ENCODE measurements at regions of chr11 and their contacts with region 1.

Region 1: GRCh38 chr11:118380571-118380970 is 20.8 kb upstream of the ATP5MG start:
- DNase-seq: no peak
- ATAC-seq: no peak
- H3K4me3 ChIP-seq: no peak overlapping the region
- H3K4me1 ChIP-seq: no peaks in the 10 kb centered on the region
- CTCF ChIP-seq: no peak

Region 2: DNA sequence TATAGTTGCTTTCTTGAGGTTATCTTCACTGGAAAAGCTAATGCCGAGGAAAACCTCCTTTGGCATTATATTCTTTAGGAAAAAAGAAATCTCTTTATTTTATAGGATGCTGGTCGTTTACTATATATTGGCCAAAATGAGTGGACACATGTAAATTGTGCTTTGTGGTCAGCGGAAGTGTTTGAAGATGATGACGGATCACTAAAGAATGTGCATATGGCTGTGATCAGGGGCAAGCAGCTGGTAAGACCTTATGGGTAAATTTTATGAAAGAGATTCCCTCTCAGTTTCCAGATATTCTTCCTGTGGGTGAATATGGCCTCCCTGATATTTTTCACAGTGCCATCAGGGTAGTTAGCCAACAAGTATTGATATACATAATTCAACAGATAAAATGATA is 117.3 kb after region 1 on chr11:
- intact Hi-C with region 1: loop called (anchors 5 to 10 kb)
- DNase-seq: no peak
- ATAC-seq: no peak
- H3K4me3 ChIP-seq: no peak overlapping the region
- H3K4me1 ChIP-seq: no peaks in the 10 kb centered on the region
- CTCF ChIP-seq: no peak

Measured in mucosa of descending colon (tissue), 3 donors.